ENCODE measurements at regions of chr14 and their contacts with region 1.

Region 1: GRCh38 chr14:77301103-77301502 is 19.6 kb downstream of the POMT2 start:
- DNase-seq: peak; percentile 65
- H3K4me3 ChIP-seq: no peak overlapping the region; a peak in 1 of 4 replicates
- H3K27ac ChIP-seq: no peak overlapping the region
- H3K4me1 ChIP-seq: peaks cover under 1 to 19% of the 10 kb centered on the region in 2 experiments; a peak in 3 of 4 replicates
- H3K27me3 ChIP-seq: no peaks in the 10 kb centered on the region
- CTCF ChIP-seq: peak; percentile 81
- EP300 ChIP-seq: no peak
- RAD21 ChIP-seq: peak; percentile 76

Region 2: DNA sequence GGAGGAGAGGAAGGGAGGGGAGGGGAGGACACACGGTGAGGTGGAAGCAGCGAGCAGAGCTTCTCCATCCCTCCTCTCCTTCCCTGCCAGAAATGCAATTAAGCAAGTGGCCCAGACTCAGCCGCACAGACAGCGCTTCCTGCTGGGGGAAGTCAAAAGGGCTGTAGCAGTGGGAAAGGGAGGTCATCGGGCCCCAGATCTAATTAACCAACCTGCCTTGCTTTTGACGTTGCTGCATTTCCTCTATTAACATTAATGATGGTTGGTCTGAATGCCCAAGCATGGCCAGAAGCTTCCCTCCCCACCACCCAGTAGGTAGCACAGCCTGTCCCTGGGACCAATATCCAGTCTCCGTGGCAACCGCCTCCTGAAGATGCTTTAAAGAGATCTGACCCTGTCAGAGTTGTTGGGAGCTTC is 25.5 kb before region 1 on chr14:
- CTCF ChIA-PET with region 1: interaction called, 12 read pairs
- POLR2A ChIA-PET with region 1: no interaction called
- DNase-seq: peak; percentile 84
- H3K4me3 ChIP-seq: no peak overlapping the region
- H3K27ac ChIP-seq: peak overlapping the region in 1 of 2 experiments; percentile 65; a peak in 2 of 4 replicates
- H3K4me1 ChIP-seq: peaks cover 0 to 18% of the 10 kb centered on the region in 2 experiments; a peak in 1 of 4 replicates
- H3K27me3 ChIP-seq: peaks cover 7% of the 10 kb centered on the region
- CTCF ChIP-seq: no peak
- EP300 ChIP-seq: no peak
- RAD21 ChIP-seq: peak; percentile 52

Region 3: DNA sequence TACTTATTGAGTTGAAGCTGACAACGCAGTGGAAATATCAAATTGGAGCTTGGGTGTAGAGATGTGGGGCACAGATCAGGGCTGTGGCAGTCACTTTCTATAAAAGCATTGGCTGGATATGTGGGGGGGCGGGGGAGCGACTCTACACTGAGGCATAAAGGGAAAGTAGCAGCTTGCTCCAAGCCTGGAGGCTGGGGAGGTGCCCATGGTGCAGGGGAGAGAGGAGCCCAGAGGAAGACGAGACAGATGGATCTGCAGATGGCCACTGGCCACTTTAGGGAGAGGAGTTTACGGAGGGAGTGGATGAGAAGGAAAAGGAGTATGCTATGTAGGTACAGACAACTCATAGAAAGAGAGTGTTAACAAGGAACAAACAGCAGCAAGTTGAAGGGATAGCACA is 16.6 kb before region 1 on chr14:
- CTCF ChIA-PET with region 1: interaction called, 15 read pairs
- POLR2A ChIA-PET with region 1: no interaction called
- DNase-seq: no peak
- H3K4me3 ChIP-seq: no peak overlapping the region
- H3K27ac ChIP-seq: no peak overlapping the region
- H3K4me1 ChIP-seq: no peaks in the 10 kb centered on the region
- H3K27me3 ChIP-seq: no peaks in the 10 kb centered on the region
- CTCF ChIP-seq: no peak
- EP300 ChIP-seq: no peak
- RAD21 ChIP-seq: no peak

Region 4: DNA sequence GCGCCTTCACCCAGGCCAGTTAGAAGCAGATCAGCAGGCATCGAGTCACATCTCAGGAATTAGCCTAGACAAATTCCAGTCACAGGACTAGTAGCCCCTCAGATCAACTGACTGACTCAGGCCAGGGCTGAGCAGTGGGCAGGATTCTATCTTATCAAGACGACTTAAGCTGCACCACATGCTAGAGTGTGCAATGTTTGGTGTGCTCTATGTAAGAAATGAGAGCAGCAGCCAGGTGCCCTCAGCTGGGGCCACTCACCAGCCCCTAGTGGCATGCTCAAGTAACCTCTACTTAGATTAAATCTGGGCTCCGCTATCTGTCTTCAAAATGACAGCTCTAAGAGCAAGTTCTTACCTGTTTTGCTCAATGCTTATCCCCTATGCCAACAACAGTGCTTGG is 10.4 kb before region 1 on chr14:
- CTCF ChIA-PET with region 1: interaction called, 27 read pairs
- POLR2A ChIA-PET with region 1: no interaction called
- DNase-seq: no peak
- H3K4me3 ChIP-seq: no peak overlapping the region
- H3K27ac ChIP-seq: no peak overlapping the region
- H3K4me1 ChIP-seq: no peaks in the 10 kb centered on the region
- H3K27me3 ChIP-seq: no peaks in the 10 kb centered on the region
- CTCF ChIP-seq: peak; percentile 24; the same call in 1 of the 2 replicates
- EP300 ChIP-seq: no peak
- RAD21 ChIP-seq: no peak